ENCODE measurements at regions of chr7 and their contacts with region 1.

Region 1: DNA sequence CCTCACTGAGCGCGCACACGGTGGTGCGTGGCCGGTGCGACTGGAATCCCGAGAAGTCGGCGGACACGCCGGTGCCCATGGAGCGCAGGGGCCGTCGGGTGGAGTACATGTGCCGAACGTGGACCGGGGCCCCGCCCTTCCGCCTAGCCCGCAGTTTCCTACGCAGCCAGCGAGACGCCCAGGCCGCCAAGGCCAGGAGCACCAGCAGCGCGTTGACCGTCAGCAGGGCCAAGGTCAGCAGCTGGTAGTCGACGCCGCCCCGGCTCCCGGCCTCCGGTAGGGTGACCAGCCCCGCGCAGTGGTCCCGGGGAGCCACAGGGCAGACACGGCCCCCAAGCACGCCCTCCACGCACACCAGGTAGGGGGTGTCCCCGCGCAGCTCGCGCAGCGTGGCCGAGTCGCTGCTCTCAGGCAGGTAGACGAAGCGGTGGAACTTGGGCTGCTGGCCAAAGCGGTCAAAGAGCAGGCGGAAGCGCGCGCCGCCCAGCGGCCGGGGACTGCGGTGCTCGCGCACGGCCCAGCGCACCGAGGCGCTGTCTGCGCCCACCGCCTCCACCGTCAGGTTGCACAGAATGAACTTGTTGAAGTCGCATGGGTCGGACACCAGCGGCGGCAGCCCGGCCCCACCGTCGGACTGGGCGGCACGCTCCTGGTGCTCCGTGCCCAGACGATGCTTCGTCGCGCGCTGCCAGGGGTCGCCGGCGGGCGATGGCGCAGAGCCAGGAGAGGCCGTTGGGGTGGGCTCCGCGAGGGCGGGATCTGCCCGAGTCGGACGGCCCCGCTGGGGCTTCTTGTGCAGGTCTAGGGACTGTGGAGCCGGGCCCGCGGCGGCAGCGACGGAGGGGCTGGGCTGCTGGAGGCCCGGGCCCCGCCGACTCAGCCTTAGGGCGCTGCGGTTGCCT is 2.2 kb downstream of the TRIL start:
- DNase-seq: peak; percentile 86
- ATAC-seq: peak; percentile 56
- H3K4me3 Mint-ChIP-seq: peak overlapping the region; percentile 59
- H3K27ac Mint-ChIP-seq: no peak overlapping the region
- H3K4me1 Mint-ChIP-seq: peaks cover 45% of the 10 kb centered on the region
- H3K27me3 Mint-ChIP-seq: peaks cover 57% of the 10 kb centered on the region
- CTCF ChIP-seq: 0 out of 2 replicates have a peak, but pooled peaks have one; percentile 25

Region 2: DNA sequence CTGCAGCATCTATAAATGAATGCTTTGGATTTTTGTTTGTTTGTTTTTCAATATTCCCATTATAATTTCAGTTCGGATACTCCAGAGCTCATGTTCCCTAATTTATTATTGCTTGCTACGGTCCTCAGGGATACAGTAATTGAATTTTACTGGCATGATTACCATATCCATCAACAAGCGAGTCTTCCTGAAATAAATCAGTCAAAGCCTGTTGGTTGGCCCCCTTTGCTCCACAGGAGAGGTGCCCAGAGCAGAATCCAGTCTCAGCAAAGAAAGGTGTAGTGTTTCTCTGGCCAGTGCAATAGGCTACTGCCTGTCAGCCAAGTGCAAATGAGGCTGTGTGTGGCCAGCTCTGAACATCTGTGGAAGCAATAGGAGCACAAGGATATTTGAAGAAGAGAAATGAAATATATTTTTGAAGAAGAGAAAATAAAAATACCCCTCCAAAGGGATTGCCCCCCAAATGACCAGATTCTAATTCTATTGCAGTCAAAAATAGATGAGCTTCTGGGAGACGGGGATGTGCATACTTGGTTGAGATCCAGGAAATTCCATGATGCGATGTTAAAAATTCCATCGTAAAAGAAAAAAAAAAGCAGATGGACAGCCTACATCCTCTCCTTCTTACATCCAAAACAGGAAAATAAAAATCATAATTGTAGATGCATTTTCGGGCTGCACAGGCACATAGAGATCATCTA is 16.0 kb before region 1 on chr7:
- CTCF ChIA-PET with region 1: interaction called, 22 read pairs
- POLR2A ChIA-PET with region 1: no interaction called
- DNase-seq: no peak
- ATAC-seq: peak; percentile 56
- H3K4me3 Mint-ChIP-seq: no peak overlapping the region
- H3K27ac Mint-ChIP-seq: no peak overlapping the region
- H3K4me1 Mint-ChIP-seq: peaks cover 24% of the 10 kb centered on the region
- H3K27me3 Mint-ChIP-seq: no peaks in the 10 kb centered on the region; the same call in 1 of the 2 replicates
- CTCF ChIP-seq: no peak

Region 3: GRCh38 chr7:29038463-29038862 is 82.5 kb after region 1 on chr7:
- CTCF ChIA-PET with region 1: interaction called, 10 read pairs
- POLR2A ChIA-PET with region 1: no interaction called
- DNase-seq: no peak
- ATAC-seq: peak; percentile 79
- H3K4me3 Mint-ChIP-seq: no peak overlapping the region
- H3K27ac Mint-ChIP-seq: no peak overlapping the region
- H3K4me1 Mint-ChIP-seq: peaks cover 34% of the 10 kb centered on the region
- H3K27me3 Mint-ChIP-seq: no peaks in the 10 kb centered on the region
- CTCF ChIP-seq: no peak

Region 4: GRCh38 chr7:29053105-29053872 is 97.3 kb after region 1 on chr7:
- CTCF ChIA-PET with region 1: no interaction called
- POLR2A ChIA-PET with region 1: no interaction called
- DNase-seq: no peak
- ATAC-seq: no peak
- H3K4me3 Mint-ChIP-seq: no peak overlapping the region
- H3K27ac Mint-ChIP-seq: no peak overlapping the region
- H3K4me1 Mint-ChIP-seq: peaks cover 7% of the 10 kb centered on the region
- H3K27me3 Mint-ChIP-seq: peaks cover 11% of the 10 kb centered on the region
- CTCF ChIP-seq: no peak

Region 5: GRCh38 chr7:29084832-29085231 is 128.9 kb after region 1 on chr7:
- CTCF ChIA-PET with region 1: interaction called, 39 read pairs
- POLR2A ChIA-PET with region 1: no interaction called
- DNase-seq: no peak
- ATAC-seq: no peak
- H3K4me3 Mint-ChIP-seq: no peak overlapping the region
- H3K27ac Mint-ChIP-seq: no peak overlapping the region
- H3K4me1 Mint-ChIP-seq: peaks cover 11% of the 10 kb centered on the region
- H3K27me3 Mint-ChIP-seq: no peaks in the 10 kb centered on the region
- CTCF ChIP-seq: no peak

Region 6: DNA sequence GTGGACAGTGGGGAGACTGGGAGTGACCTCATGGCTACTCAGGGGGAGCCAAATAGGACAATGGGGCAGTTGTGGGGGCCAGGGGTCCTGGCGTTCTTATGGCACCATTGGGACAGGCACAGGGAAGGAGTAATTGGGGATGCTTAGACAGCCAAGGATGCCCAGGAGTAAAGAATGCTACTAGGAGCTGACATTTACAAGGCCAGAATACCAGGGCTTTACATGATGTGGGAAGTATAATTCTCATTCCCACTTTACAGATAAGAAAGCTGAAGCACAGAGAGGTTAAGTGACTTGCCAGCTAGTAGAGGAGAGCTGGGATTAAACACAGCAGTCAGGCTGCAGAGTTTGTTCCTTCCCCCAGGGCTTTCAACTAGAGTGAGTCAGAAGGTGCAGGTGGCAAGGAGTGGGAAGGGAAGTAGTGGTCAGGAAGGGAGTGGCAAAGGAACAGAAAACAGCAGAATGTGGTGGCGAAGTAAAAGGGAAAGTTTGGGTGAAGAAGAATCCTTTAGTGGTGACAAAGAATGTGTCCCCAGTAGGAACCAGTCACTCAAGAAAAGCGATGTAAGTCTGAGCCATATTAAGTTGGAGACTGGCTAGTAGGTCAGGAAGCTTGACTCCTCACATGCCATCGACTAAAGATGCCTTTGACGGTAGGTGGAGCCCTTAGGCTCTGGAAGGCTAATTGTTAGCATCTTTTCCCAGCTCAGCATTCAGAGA is 157.6 kb after region 1 on chr7:
- CTCF ChIA-PET with region 1: interaction called, 21 read pairs
- POLR2A ChIA-PET with region 1: no interaction called
- DNase-seq: peak; percentile 28
- ATAC-seq: peak; percentile 92
- H3K4me3 Mint-ChIP-seq: no peak overlapping the region
- H3K27ac Mint-ChIP-seq: peak overlapping the region; percentile 66
- H3K4me1 Mint-ChIP-seq: peaks cover 33% of the 10 kb centered on the region
- H3K27me3 Mint-ChIP-seq: no peaks in the 10 kb centered on the region
- CTCF ChIP-seq: no peak

Region 7: DNA sequence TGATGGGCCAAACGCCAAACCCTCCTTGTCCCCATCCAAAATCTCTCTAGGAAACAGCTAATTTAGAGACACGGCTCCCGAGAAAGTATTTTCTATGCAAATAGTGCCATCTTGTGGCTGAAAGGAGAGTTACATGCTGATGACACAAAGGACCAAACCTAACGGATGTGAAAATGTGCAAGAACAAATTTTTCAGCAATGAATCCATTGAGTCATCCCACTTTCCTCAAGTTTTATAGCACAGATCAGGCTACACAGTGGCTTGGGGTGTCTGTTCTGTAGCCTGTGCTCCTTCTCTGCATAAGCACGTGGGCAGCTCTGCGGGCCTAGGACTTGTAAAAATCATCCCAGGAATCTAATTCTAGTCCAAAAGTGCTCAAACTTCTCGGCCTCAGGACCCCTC is 452.9 kb after region 1 on chr7:
- CTCF ChIA-PET with region 1: interaction called, 60 read pairs
- POLR2A ChIA-PET with region 1: no interaction called
- DNase-seq: peak; percentile 34
- ATAC-seq: peak; percentile 60
- H3K4me3 Mint-ChIP-seq: peak overlapping the region; percentile 33; the same call in 1 of the 2 replicates
- H3K27ac Mint-ChIP-seq: no peak overlapping the region
- H3K4me1 Mint-ChIP-seq: peaks cover 19% of the 10 kb centered on the region
- H3K27me3 Mint-ChIP-seq: no peaks in the 10 kb centered on the region
- CTCF ChIP-seq: peak; percentile 84

Measured in WTC11 (cell line).